Ascending aorta (tissue), 2 donors: ENCODE measurements at regions of chr10 and their contacts with region 1.

Region 1: GRCh38 chr10:113126229-113127201 is 176.5 kb downstream of the TCF7L2 start:
- DNase-seq: peak in 1 of 2 donors; percentile 85
- H3K4me3 ChIP-seq: peak overlapping the region; percentile 55 to 61
- H3K27ac ChIP-seq: no peak overlapping the region
- H3K4me1 ChIP-seq: peaks cover 0 to 6% of the 10 kb centered on the region in 2 donors
- H3K27me3 ChIP-seq: no peaks in the 10 kb centered on the region
- CTCF ChIP-seq: peak; percentile 35 to 87 (median 36)

Region 2: DNA sequence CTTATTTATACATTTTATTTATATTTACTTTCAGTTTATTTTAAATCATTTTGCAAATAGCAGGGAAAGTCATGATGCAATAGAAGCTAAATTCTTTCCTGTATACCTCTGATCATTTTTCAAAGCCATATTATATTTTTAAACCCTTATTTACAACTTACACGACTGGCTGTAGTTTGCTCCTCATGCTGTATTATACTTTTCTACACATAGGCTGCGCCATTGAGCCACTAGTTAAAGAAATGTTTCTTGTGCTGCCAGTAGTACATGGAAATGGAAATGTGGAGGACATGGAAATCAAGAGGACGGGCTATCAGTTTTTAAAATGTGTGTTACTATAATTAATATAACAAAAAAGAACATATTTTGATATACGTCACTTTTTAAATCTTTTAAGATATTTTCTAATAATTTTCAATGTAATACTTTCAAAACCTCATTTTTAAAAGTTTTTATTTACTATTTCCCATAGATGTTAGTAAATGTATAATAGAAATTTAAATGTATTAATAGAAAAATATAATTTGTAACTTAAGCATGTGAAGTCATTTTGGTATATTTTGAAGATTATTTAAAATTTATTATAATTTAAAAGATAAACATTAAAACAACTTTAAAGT is 561.0 kb before region 1 on chr10:
- intact Hi-C with region 1: loop called (anchors 5 kb)
- DNase-seq: no peak
- H3K4me3 ChIP-seq: no peak overlapping the region
- H3K27ac ChIP-seq: no peak overlapping the region
- H3K4me1 ChIP-seq: peaks cover 0 to 5% of the 10 kb centered on the region in 2 donors
- H3K27me3 ChIP-seq: no peaks in the 10 kb centered on the region
- CTCF ChIP-seq: peak; percentile 37 to 52 (median 50)

Region 3: GRCh38 chr10:112721080-112721698 is 405.3 kb before region 1 on chr10:
- intact Hi-C with region 1: loop called (anchors 1 kb)
- DNase-seq: no peak
- H3K4me3 ChIP-seq: no peak overlapping the region
- H3K27ac ChIP-seq: no peak overlapping the region
- H3K4me1 ChIP-seq: peaks cover 0 to 3% of the 10 kb centered on the region in 2 donors
- H3K27me3 ChIP-seq: no peaks in the 10 kb centered on the region
- CTCF ChIP-seq: peak; percentile 53 to 59 (median 54)

Region 4: DNA sequence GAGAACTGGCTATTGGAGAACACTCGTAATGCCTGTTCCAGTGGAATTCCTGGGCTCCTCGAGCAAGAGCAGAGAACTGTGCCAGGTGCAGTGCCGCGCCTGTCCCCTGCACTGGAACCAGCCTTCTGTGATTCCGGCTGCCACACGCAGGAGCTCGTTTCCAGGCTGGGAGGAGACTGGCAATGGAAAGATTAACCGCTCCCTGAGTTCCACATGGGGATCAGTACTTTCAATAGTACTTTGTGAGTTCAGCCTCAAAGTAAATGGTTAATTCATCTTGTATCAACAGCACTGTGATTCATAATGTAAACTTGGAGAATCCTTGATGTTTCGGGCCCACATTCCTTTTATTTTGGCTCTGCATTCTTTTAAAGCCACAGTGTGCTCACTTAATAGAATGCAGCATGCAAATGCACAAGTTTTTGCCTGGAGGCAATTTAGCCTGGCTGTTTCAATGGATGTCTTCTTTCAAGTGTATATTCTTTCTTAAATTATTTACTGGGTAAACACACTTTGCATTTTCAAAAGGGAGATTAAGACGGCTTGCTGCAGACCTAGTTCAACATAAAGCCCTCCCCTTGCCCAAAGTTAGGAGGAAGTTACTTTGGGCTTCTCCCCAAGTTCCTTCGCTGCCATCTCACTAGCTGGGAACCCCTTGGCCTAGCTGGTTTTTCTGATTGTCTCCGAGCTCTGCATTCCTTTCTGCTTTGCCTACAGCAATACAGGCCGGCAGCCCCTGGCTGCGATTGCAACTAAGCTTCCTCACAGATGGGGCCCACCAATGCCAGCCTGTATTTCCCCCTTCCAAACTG is 314.6 kb before region 1 on chr10:
- intact Hi-C with region 1: loop called (anchors 5 kb)
- DNase-seq: peak; percentile 32 to 90
- H3K4me3 ChIP-seq: no peak overlapping the region
- H3K27ac ChIP-seq: peak overlapping the region; percentile 29 to 56
- H3K4me1 ChIP-seq: peaks cover 4 to 15% of the 10 kb centered on the region in 2 donors
- H3K27me3 ChIP-seq: no peaks in the 10 kb centered on the region
- CTCF ChIP-seq: no peak

Region 5: DNA sequence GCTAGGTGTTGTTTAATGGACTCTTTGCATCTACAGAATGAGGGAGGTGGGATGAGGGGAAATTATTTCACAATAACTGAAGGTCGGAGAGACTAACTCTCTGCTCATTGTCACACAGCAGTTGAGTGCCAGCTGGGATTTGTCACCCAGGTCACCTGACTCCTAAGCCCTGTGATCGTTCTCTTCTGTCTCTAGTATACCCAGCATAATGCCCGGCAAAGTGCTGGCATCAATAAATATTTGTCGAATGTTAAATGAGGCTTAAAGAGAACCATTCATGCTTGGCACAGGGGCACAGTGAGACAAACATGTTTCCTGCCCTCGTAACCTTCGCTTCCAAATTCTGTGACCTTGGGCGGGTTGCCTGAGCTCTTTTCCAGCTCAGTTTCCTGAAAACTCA is 105.7 kb before region 1 on chr10:
- intact Hi-C with region 1: loop called (anchors 5 kb)
- DNase-seq: no peak
- H3K4me3 ChIP-seq: no peak overlapping the region
- H3K27ac ChIP-seq: peak overlapping the region; percentile 64 to 72
- H3K4me1 ChIP-seq: peaks cover 13 to 50% of the 10 kb centered on the region in 2 donors
- H3K27me3 ChIP-seq: no peaks in the 10 kb centered on the region
- CTCF ChIP-seq: no peak